Activated CD8-positive, alpha-beta memory T cell treated with anti-CD3 and anti-CD28 coated beads, Interleukin-2, amount 10 ng/mL, durations not matched to agents 7 days and 5 days (primary cell): ENCODE measurements at regions of chr9 and their contacts with region 1.

Region 1: GRCh38 chr9:92140074-92140753 is 25.0 kb upstream of the SPTLC1 start:
- DNase-seq: peak; percentile 82
- ATAC-seq: peak; percentile 71
- H3K4me3 Mint-ChIP-seq: no peak overlapping the region
- H3K27ac Mint-ChIP-seq: no peak overlapping the region
- H3K4me1 Mint-ChIP-seq: peaks cover 10% of the 10 kb centered on the region
- H3K27me3 Mint-ChIP-seq: peaks cover 37% of the 10 kb centered on the region

Region 2: DNA sequence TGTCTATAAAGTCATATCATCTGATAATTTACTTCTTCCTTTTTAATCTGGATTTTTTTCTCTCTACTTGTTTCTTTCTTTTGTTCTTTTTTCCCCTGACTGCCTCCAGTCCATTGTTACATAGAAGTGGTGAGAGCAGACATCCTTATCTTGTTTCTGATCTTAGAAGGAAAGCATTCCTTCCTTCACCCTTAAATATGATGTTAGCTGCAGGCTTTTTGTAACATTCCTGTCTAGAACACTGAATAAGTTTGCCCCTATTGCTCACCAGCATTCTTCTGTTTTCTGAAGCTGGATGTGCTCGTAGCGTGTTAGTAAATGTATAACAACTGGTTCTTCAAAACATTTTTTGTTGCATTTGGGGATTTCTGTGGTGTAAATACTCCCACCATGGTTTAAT is 579.9 kb before region 1 on chr9:
- CTCF ChIA-PET with region 1: no interaction called
- DNase-seq: no peak
- ATAC-seq: no peak
- H3K4me3 Mint-ChIP-seq: no peak overlapping the region
- H3K27ac Mint-ChIP-seq: no peak overlapping the region
- H3K4me1 Mint-ChIP-seq: no peaks in the 10 kb centered on the region
- H3K27me3 Mint-ChIP-seq: peaks cover 62% of the 10 kb centered on the region

Region 3: GRCh38 chr9:92122800-92123199 is 17.4 kb before region 1 on chr9:
- CTCF ChIA-PET with region 1: interaction called, 15 read pairs
- DNase-seq: no peak
- ATAC-seq: no peak
- H3K4me3 Mint-ChIP-seq: no peak overlapping the region
- H3K27ac Mint-ChIP-seq: no peak overlapping the region
- H3K4me1 Mint-ChIP-seq: no peaks in the 10 kb centered on the region
- H3K27me3 Mint-ChIP-seq: peaks cover 18% of the 10 kb centered on the region

Region 4: DNA sequence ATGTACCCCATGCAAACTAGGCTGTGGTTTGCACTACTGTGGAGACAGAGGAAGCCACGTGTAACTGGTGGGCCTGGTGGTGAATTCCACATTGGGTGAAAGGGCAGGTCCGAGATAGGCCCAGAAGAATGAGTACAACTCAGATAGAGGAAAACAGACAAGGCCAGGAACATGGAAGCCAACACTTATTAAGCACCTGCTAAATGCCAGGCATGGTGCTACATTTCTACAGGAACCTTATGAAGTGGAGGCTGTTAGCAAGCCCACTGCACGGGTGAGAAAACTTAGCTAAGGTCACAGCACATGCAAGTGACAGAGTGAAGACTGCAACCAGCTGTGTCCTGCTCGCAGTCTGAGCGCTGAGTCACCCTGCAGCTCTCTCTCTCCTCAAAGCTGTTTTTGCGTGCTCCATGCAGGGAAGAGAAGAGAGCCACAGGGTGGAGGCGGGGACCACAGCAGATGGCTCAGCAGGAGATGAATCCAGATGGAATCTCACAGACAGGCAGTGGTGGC is 40.5 kb after region 1 on chr9:
- CTCF ChIA-PET with region 1: interaction called, 10 read pairs
- DNase-seq: no peak
- ATAC-seq: no peak
- H3K4me3 Mint-ChIP-seq: no peak overlapping the region
- H3K27ac Mint-ChIP-seq: no peak overlapping the region
- H3K4me1 Mint-ChIP-seq: no peaks in the 10 kb centered on the region
- H3K27me3 Mint-ChIP-seq: peaks cover 9% of the 10 kb centered on the region

Region 5: DNA sequence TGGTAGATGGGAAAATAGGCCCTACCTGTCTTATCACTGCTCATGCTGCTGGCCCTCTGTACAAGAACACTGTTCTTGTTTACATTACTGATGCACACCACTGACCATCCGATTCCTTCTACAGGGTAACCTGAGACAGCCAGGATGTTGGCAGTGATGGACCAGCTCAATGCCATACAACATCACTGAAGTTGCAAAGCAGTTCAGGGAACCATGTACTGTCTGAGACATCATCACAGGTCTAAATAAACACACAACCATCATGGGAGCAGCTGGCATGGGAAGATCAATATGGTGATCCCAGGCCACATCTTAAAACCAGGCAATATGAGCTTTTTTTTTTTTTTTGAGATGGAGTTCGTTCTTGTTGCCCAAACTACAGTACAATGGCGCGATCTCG is 94.3 kb after region 1 on chr9:
- CTCF ChIA-PET with region 1: interaction called, 15 read pairs
- DNase-seq: no peak
- ATAC-seq: no peak
- H3K4me3 Mint-ChIP-seq: no peak overlapping the region
- H3K27ac Mint-ChIP-seq: no peak overlapping the region
- H3K4me1 Mint-ChIP-seq: peaks cover 11% of the 10 kb centered on the region
- H3K27me3 Mint-ChIP-seq: no peaks in the 10 kb centered on the region

Region 6: GRCh38 chr9:92276331-92277032 is 136.3 kb after region 1 on chr9:
- CTCF ChIA-PET with region 1: interaction called, 23 read pairs
- DNase-seq: peak; percentile 62
- ATAC-seq: peak; percentile 45
- H3K4me3 Mint-ChIP-seq: peak overlapping the region; percentile 54
- H3K27ac Mint-ChIP-seq: peak overlapping the region; percentile 86
- H3K4me1 Mint-ChIP-seq: peaks cover 44% of the 10 kb centered on the region
- H3K27me3 Mint-ChIP-seq: no peaks in the 10 kb centered on the region

Region 7: GRCh38 chr9:92669890-92670708 is 529.9 kb after region 1 on chr9 and contains the start of gene IPPK:
- CTCF ChIA-PET with region 1: interaction called, 12 read pairs
- DNase-seq: peak; percentile 99
- ATAC-seq: peak; percentile 93
- H3K4me3 Mint-ChIP-seq: peak within 1 kb of the TSS; percentile 96
- H3K27ac Mint-ChIP-seq: peak within 1 kb of the TSS; percentile 95
- H3K4me1 Mint-ChIP-seq: peaks cover 37% of the 10 kb centered on the region
- H3K27me3 Mint-ChIP-seq: no peaks in the 10 kb centered on the region
- total RNA-seq, gene IPPK: 11.4 to 15.1 TPM